GM10248 (cell line): ENCODE measurements at regions of chr15 and their contacts with region 1.

Region 1: GRCh38 chr15:41972253-41973242 is at the start of gene EHD4:
- DNase-seq: peak; percentile 96
- CTCF ChIP-seq: peak; percentile 47

Region 2: DNA sequence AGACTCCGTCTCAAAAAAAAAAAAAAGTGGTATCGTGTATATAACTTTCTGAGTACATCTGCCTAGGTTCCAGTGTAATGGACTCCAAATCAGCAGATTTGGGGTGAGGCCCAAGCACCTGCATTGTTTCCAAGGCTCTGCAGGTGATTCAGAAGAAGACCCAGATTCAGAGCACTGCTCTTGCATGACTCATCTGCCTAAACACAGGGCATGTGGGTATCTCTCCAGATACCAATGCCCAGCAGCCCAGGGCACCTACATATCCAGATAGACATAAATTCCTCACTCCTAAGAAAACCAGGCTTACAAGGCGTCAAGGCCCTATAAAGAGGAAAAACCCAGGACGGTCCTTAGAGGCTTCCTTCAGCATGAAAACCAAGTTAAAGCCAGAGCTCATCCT is 594.6 kb before region 1 on chr15:
- CTCF ChIA-PET with region 1: no interaction called
- POLR2A ChIA-PET with region 1: no interaction called
- DNase-seq: no peak
- CTCF ChIP-seq: no peak

Region 3: GRCh38 chr15:41952013-41952563 is 20.5 kb before region 1 on chr15:
- CTCF ChIA-PET with region 1: interaction called, 11 read pairs
- POLR2A ChIA-PET with region 1: interaction called, 4 read pairs
- DNase-seq: no peak
- CTCF ChIP-seq: no peak

Region 4: DNA sequence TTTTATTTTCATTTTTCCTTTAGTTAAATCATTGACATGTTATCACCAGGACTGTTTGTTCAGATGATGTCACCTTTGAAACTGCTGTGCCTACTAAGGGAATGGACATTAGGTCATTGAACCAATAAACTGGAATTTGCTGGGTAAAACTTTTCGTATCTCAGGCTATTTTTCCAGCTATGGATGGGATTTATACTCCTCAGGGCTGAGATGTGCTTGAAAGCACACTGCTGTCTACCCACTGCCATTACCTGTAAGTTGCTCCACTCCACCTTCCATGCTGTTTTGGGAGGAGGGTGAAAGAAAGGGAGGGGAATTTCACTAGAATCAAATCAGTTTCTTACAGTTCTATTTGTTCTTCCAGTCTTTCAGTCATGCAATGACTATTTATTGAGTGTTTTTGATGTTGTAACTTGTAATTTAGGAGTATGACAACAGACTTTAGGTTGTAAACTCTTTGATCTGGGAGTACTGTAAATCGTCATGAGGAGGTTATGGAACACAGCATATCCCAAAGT is 11.5 kb before region 1 on chr15:
- CTCF ChIA-PET with region 1: interaction called, 14 read pairs
- POLR2A ChIA-PET with region 1: interaction called, 4 read pairs
- DNase-seq: no peak
- CTCF ChIP-seq: no peak

Region 5: DNA sequence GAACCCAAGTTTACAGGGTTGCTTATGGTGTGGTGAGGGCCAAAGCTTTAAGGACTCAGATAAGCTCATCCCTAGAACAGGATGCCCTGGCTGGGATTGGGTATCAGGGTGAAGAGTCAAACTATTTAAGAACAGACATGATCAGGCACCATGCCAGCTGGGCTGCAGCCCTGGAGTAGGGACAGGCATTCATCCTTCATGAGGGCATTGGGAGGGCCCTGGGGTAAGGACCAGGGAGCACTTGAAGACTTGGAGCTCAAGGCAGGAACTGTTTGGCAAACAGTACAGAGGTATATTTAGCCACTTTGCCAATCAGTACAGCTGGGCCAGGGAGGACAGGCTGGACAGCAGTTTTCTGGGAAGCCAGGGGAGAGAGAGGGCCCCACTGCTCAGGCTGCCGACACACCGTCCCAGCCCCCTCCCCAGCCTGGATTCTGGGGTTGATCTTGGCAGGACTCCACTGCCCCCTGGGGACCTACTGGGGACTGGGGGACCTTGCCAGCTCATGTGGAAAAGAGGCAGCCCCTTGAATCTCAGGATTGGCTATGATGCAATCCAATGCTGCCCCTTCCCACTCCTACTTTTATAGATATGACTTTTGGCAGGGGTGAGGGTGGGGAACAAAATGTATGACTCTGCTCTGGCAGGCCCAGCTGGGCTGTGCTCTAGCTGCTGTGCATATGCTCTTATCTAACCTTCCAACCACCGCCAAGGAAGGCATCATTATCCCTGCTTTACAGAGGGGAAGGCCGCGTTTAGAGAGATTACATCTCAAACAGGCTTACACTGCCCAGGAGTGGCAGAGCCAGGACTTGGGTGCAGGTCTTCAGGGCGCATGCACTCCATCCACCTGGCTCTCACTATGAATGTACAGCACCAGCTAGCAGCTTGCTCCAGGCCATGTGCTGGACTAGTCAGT is 46.0 kb after region 1 on chr15:
- CTCF ChIA-PET with region 1: no interaction called
- POLR2A ChIA-PET with region 1: no interaction called
- DNase-seq: no peak
- CTCF ChIP-seq: no peak

Region 6: GRCh38 chr15:42107473-42107872 is 134.9 kb after region 1 on chr15:
- CTCF ChIA-PET with region 1: no interaction called
- POLR2A ChIA-PET with region 1: no interaction called
- DNase-seq: peak; percentile 5
- CTCF ChIP-seq: no peak